B cell (primary cell): ENCODE measurements at regions of chr5 and their contacts with region 1.

Region 1: GRCh38 chr5:67209142-67209771 is 12.7 kb upstream of the CD180 start:
- DNase-seq: peak; percentile 85
- ATAC-seq: peak; percentile 50
- H3K4me3 ChIP-seq: no peak overlapping the region
- H3K4me3 Mint-ChIP-seq: peak overlapping the region; percentile 62
- H3K27ac ChIP-seq: peak overlapping the region; percentile 9 to 15
- H3K27ac Mint-ChIP-seq: peak overlapping the region; percentile 90
- H3K4me1 ChIP-seq: peaks cover 52% of the 10 kb centered on the region in 2 donors
- H3K4me1 Mint-ChIP-seq: peaks cover 60% of the 10 kb centered on the region
- H3K27me3 ChIP-seq: no peaks in the 10 kb centered on the region
- H3K27me3 Mint-ChIP-seq: no peaks in the 10 kb centered on the region
- CTCF ChIP-seq: peak; percentile 91

Region 2: GRCh38 chr5:65394087-65394486 is 1815.2 kb before region 1 on chr5:
- CTCF ChIA-PET with region 1: no interaction called
- POLR2A ChIA-PET with region 1: no interaction called
- intact Hi-C with region 1: no loop called
- DNase-seq: no peak
- ATAC-seq: no peak
- H3K4me3 ChIP-seq: no peak overlapping the region
- H3K4me3 Mint-ChIP-seq: no peak overlapping the region
- H3K27ac ChIP-seq: no peak overlapping the region
- H3K27ac Mint-ChIP-seq: no peak overlapping the region
- H3K4me1 ChIP-seq: no peaks in the 10 kb centered on the region
- H3K4me1 Mint-ChIP-seq: no peaks in the 10 kb centered on the region
- H3K27me3 ChIP-seq: no peaks in the 10 kb centered on the region
- H3K27me3 Mint-ChIP-seq: no peaks in the 10 kb centered on the region
- CTCF ChIP-seq: no peak

Region 3: DNA sequence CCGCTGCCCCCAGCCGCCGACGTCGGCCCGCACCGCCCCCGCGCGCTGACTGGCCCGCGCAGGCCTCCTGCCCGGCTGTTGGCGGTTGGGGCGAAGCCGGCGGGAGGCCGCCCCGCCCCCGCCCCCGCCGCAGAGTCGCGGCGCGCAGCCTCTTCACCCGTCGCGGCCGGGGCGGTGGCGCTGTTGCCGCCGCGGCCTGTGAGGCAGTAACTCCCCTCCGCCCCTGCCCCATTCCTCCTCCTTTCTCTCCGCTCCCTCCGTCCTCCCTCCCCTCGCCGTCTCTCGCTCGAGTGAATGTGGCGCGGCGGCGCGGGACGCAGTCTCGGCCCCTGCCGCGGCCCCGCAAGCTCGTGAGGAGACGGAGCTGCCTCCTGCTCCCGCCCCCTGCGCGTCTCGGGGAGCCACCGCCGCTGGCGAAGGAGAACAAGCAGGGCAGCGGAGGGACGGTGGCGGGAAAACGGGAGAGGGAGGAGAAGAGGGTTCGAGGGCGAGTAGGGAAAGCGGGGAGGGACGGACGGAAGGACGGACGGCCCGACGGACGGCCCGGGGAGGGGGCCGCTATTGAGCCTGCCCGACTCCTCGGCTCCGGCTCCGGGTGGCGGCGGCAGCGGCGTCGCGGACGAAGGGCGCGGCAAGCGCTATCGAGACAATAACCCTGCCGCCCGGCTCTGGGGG is 1283.5 kb before region 1 on chr5:
- CTCF ChIA-PET with region 1: no interaction called
- POLR2A ChIA-PET with region 1: no interaction called
- intact Hi-C with region 1: loop called (anchors 5 kb)
- DNase-seq: peak; percentile 94
- ATAC-seq: peak; percentile 74
- H3K4me3 ChIP-seq: peak overlapping the region; percentile 30 to 96 (median 93)
- H3K4me3 Mint-ChIP-seq: peak overlapping the region; percentile 94
- H3K27ac ChIP-seq: peak overlapping the region; percentile 94 to 98
- H3K27ac Mint-ChIP-seq: peak overlapping the region; percentile 99
- H3K4me1 ChIP-seq: peaks cover 16 to 28% of the 10 kb centered on the region in 2 donors
- H3K4me1 Mint-ChIP-seq: peaks cover 44% of the 10 kb centered on the region
- H3K27me3 ChIP-seq: no peaks in the 10 kb centered on the region
- H3K27me3 Mint-ChIP-seq: no peaks in the 10 kb centered on the region
- CTCF ChIP-seq: peak; percentile 29

Region 4: DNA sequence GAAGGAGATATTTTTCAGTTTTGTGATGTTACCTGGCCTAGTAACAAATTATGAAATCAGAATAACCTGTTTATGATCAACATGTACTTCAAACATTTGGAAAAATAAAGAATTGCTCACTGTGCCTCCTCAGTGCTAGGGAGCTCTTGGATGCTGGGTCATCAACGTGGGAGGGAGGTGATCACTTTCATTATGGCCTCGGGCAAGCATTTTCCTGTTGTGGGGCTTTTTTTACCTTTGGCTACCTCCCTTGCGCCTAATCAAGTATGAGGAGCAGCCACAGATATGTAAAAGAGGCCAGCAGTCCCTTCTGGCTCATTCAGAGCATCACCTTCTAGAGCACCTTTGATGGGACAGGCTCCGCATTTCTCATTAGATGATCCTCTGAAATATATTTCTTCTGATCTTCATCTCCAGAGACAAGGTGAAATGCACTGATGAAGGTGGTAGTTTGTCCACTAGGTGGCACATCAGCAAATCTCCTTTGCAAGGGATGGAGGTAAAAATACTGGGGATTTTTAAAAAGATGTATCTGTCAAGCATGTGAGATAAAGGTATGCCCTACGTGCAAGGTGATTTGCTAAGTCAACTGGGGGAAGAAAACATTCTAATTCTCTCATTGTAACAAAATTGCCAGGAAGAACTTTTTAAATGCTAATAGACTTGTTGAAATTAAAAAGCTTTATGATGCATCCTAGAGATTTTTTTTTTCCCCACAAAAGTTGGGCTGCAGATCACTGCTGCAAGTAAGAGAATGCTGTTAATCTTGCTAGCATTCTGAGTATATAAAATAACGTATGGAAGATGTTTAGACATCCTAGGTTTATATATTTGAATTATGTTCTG is 394.9 kb before region 1 on chr5:
- CTCF ChIA-PET with region 1: interaction called, 8 read pairs
- POLR2A ChIA-PET with region 1: no interaction called
- intact Hi-C with region 1: loop called (anchors 1 kb)
- DNase-seq: peak; percentile 46
- ATAC-seq: no peak
- H3K4me3 ChIP-seq: no peak overlapping the region
- H3K4me3 Mint-ChIP-seq: no peak overlapping the region
- H3K27ac ChIP-seq: no peak overlapping the region
- H3K27ac Mint-ChIP-seq: no peak overlapping the region
- H3K4me1 ChIP-seq: peaks cover 0 to 7% of the 10 kb centered on the region in 2 donors
- H3K4me1 Mint-ChIP-seq: peaks cover 23% of the 10 kb centered on the region
- H3K27me3 ChIP-seq: peaks cover 0 to 6% (median 0%) of the 10 kb centered on the region in 4 experiments
- H3K27me3 Mint-ChIP-seq: peaks cover 4% of the 10 kb centered on the region
- CTCF ChIP-seq: peak; percentile 80

Region 5: GRCh38 chr5:67156976-67157583 is 52.2 kb before region 1 on chr5:
- CTCF ChIA-PET with region 1: interaction called, 582 read pairs
- POLR2A ChIA-PET with region 1: interaction called, 3 read pairs
- intact Hi-C with region 1: loop called (anchors 1 kb)
- DNase-seq: peak; percentile 69
- ATAC-seq: peak; percentile 69
- H3K4me3 ChIP-seq: no peak overlapping the region
- H3K4me3 Mint-ChIP-seq: no peak overlapping the region
- H3K27ac ChIP-seq: no peak overlapping the region
- H3K27ac Mint-ChIP-seq: peak overlapping the region; percentile 46
- H3K4me1 ChIP-seq: peaks cover 3 to 6% of the 10 kb centered on the region in 2 donors
- H3K4me1 Mint-ChIP-seq: peaks cover 17% of the 10 kb centered on the region
- H3K27me3 ChIP-seq: no peaks in the 10 kb centered on the region
- H3K27me3 Mint-ChIP-seq: no peaks in the 10 kb centered on the region
- CTCF ChIP-seq: peak; percentile 95

Region 6: GRCh38 chr5:67188274-67189078 is 20.8 kb before region 1 on chr5:
- CTCF ChIA-PET with region 1: interaction called, 139 read pairs
- POLR2A ChIA-PET with region 1: interaction called, 7 read pairs
- intact Hi-C with region 1: loop called (anchors 2 kb)
- DNase-seq: no peak
- ATAC-seq: no peak
- H3K4me3 ChIP-seq: peak overlapping the region in 2 of 5 experiments; percentile 24 to 45
- H3K4me3 Mint-ChIP-seq: peak overlapping the region; percentile 79
- H3K27ac ChIP-seq: peak overlapping the region; percentile 8 to 98
- H3K27ac Mint-ChIP-seq: peak overlapping the region; percentile 97
- H3K4me1 ChIP-seq: peaks cover 88 to 89% of the 10 kb centered on the region in 2 donors
- H3K4me1 Mint-ChIP-seq: peaks cover 86% of the 10 kb centered on the region
- H3K27me3 ChIP-seq: no peaks in the 10 kb centered on the region
- H3K27me3 Mint-ChIP-seq: no peaks in the 10 kb centered on the region
- CTCF ChIP-seq: no peak

Region 7: GRCh38 chr5:67246108-67246507 is 36.9 kb after region 1 on chr5:
- CTCF ChIA-PET with region 1: interaction called, 26 read pairs
- POLR2A ChIA-PET with region 1: no interaction called
- intact Hi-C with region 1: no loop called
- DNase-seq: peak; percentile 78
- ATAC-seq: peak; percentile 31
- H3K4me3 ChIP-seq: no peak overlapping the region
- H3K4me3 Mint-ChIP-seq: no peak overlapping the region
- H3K27ac ChIP-seq: no peak overlapping the region
- H3K27ac Mint-ChIP-seq: no peak overlapping the region
- H3K4me1 ChIP-seq: peaks cover 5 to 8% of the 10 kb centered on the region in 2 donors
- H3K4me1 Mint-ChIP-seq: peaks cover 5% of the 10 kb centered on the region
- H3K27me3 ChIP-seq: no peaks in the 10 kb centered on the region
- H3K27me3 Mint-ChIP-seq: no peaks in the 10 kb centered on the region
- CTCF ChIP-seq: peak; percentile 93